Activated CD4-positive, alpha-beta memory T cell treated with anti-CD3 and anti-CD28 coated beads for 36 hours (primary cell): ENCODE measurements at regions of chr19 and their contacts with region 1.

Region 1: GRCh38 chr19:43532962-43533545 is at the start of gene ZNF575:
- DNase-seq: peak; percentile 95
- H3K4me3 Mint-ChIP-seq: peak within 1 kb of the TSS; percentile 82
- H3K27ac Mint-ChIP-seq: peak within 1 kb of the TSS; percentile 94
- H3K4me1 Mint-ChIP-seq: peaks cover 21% of the 10 kb centered on the region
- H3K27me3 Mint-ChIP-seq: no peaks in the 10 kb centered on the region
- total RNA-seq, gene ZNF575: 3.1 to 3.7 TPM

Region 2: DNA sequence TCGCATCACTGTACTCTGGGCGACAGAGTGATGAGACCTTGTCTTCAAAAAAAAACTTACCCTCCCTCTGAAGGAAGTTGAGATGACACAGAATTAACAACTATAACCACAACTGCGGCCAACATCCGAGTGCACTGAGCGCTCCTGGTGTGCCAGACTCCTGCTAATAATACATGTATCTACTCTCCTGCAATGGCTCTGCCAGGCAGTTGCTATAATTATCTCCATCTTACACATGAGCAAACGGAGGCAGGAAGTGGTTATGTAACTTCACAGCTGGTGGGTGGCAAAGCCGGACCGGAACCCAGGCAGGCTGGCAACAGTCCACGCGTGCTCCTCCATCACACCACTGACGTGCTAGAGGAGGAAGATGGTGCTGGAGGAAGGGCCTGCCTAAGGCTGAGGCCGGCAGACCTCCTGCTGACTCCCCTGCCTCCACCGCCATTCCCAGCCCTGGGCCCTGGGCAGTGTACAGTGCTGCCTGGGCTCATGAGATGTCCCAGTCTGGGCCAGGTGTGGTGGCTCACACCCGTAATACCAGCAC is 29.7 kb after region 1 on chr19:
- CTCF ChIA-PET with region 1: interaction called, 79 read pairs
- POLR2A ChIA-PET with region 1: no interaction called
- intact Hi-C with region 1: loop called (anchors 2 kb)
- DNase-seq: peak; percentile 86
- H3K4me3 Mint-ChIP-seq: peak overlapping the region; percentile 40
- H3K27ac Mint-ChIP-seq: peak overlapping the region; percentile 95
- H3K4me1 Mint-ChIP-seq: peaks cover 38% of the 10 kb centered on the region
- H3K27me3 Mint-ChIP-seq: no peaks in the 10 kb centered on the region

Region 3: GRCh38 chr19:43575156-43575950 is 42.3 kb after region 1 on chr19 and contains the starts of genes PINLYP and XRCC1:
- CTCF ChIA-PET with region 1: interaction called, 3 read pairs
- POLR2A ChIA-PET with region 1: no interaction called
- intact Hi-C with region 1: loop called (anchors 2 kb)
- DNase-seq: peak; percentile 98
- H3K4me3 Mint-ChIP-seq: peak within 1 kb of the TSS; percentile 96
- H3K27ac Mint-ChIP-seq: peak within 1 kb of the TSS; percentile 86
- H3K4me1 Mint-ChIP-seq: peaks cover 24% of the 10 kb centered on the region
- H3K27me3 Mint-ChIP-seq: no peaks in the 10 kb centered on the region
- total RNA-seq, gene PINLYP: 2.2 to 3.7 TPM
- total RNA-seq, gene XRCC1: 42.5 to 43.0 TPM

Region 4: GRCh38 chr19:43619262-43620060 is 86.4 kb after region 1 on chr19 and contains the start of gene ZNF428:
- CTCF ChIA-PET with region 1: no interaction called
- POLR2A ChIA-PET with region 1: no interaction called
- intact Hi-C with region 1: loop called (anchors 2 kb)
- DNase-seq: peak; percentile 92
- H3K4me3 Mint-ChIP-seq: peak within 1 kb of the TSS; percentile 97
- H3K27ac Mint-ChIP-seq: peak within 1 kb of the TSS; percentile 98
- H3K4me1 Mint-ChIP-seq: peaks cover 14% of the 10 kb centered on the region
- H3K27me3 Mint-ChIP-seq: no peaks in the 10 kb centered on the region
- total RNA-seq, gene ZNF428: 11.7 to 12.5 TPM

Region 5: GRCh38 chr19:43634872-43635560 is 102.0 kb after region 1 on chr19:
- CTCF ChIA-PET with region 1: no interaction called
- POLR2A ChIA-PET with region 1: no interaction called
- intact Hi-C with region 1: no loop called
- DNase-seq: no peak
- H3K4me3 Mint-ChIP-seq: no peak overlapping the region
- H3K27ac Mint-ChIP-seq: no peak overlapping the region
- H3K4me1 Mint-ChIP-seq: peaks cover 7% of the 10 kb centered on the region
- H3K27me3 Mint-ChIP-seq: peaks cover 20% of the 10 kb centered on the region

Region 6: DNA sequence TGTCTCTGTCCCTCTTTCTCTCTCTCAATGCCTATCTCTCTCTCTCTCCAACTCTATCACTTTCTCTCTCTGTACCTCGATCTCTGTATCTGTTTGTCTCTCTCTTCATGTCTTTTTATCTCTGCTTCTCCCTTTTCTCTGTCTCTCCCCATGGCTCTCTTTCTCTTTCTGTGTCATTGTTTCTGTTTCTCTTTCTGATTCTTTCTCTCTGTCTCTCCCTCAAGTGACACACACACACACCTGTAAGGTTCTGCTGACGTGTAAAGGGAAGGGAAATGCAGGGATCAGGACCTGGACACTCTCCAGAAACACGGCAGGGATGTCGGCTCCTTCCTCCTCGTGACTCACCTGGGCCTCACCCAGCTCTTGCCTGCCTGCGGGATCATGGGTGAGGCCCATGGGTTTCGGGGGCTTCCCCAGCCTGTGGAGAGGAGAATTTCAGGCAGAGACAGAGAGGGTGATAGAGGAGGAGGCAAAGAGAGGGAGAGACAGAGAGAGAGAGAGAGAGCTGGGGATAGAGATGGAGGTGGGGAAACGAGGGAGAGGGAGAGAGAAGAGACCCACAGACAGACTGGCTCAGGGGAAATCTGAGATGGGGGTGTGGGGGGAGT is 142.3 kb after region 1 on chr19:
- CTCF ChIA-PET with region 1: no interaction called
- POLR2A ChIA-PET with region 1: no interaction called
- intact Hi-C with region 1: no loop called
- DNase-seq: peak; percentile 29
- H3K4me3 Mint-ChIP-seq: peak overlapping the region; percentile 14
- H3K27ac Mint-ChIP-seq: peak overlapping the region; percentile 49
- H3K4me1 Mint-ChIP-seq: peaks cover 12% of the 10 kb centered on the region
- H3K27me3 Mint-ChIP-seq: no peaks in the 10 kb centered on the region